ENCODE measurements at regions of chr10 and their contacts with region 1.

Region 1: GRCh38 chr10:110547139-110547761 is 20.2 kb upstream of the SMC3 start:
- ATAC-seq: peak; percentile 26 to 75 (median 54)
- H3K4me3 ChIP-seq: no peak overlapping the region
- H3K27ac ChIP-seq: no peak overlapping the region
- H3K4me1 ChIP-seq: peaks cover 0 to 5% of the 10 kb centered on the region in 2 donors

Region 2: GRCh38 chr10:110304780-110305421 is 242.3 kb before region 1 on chr10 and contains the start of gene SMNDC1:
- in situ Hi-C with region 1: loop called in 7 of 9 experiments (anchors 10 to 25 kb)
- ATAC-seq: peak; percentile 82 to 96 (median 94)
- H3K4me3 ChIP-seq: peak within 1 kb of the TSS; percentile 59 to 91 (median 67)
- H3K27ac ChIP-seq: peak within 1 kb of the TSS; percentile 88 to 93
- H3K4me1 ChIP-seq: peaks cover 6 to 24% of the 10 kb centered on the region in 2 donors
- total RNA-seq, gene SMNDC1: 8.3 to 24.0 (median 12.5) TPM

Region 3: DNA sequence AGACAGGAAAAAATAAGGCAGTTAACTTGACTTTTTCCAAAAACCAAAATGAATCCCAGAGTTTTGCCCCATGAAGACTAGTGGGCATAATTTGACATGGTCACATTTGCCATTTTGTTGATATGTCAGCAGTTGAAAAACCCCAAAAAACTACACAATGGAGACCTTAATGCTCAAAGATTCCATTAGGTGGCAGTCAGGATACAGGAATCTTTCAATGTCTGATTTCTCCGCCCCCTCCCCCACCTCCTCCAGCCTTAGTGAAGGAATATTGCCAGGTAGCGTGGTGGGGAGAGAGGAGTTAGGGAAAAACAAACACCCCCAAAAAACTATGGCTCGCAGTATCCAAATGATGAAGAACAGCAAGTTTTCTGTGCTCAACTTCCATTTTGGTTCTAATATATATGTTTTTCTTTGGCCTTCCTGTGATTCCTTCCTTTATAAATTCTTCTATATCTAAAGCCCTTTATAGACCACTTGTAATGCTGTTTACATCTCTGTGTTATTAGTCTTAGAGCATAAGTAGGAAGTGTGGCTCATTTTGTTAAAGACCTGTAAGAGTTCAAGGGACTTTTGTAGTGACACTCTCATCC is 235.8 kb before region 1 on chr10:
- in situ Hi-C with region 1: loop called in 7 of 9 experiments (anchors 10 to 25 kb)
- ATAC-seq: peak; percentile 26 to 78 (median 58)
- H3K4me3 ChIP-seq: no peak overlapping the region
- H3K27ac ChIP-seq: no peak overlapping the region
- H3K4me1 ChIP-seq: peaks cover 0 to under 1% of the 10 kb centered on the region in 2 donors

Region 4: GRCh38 chr10:110354322-110354766 is 192.9 kb before region 1 on chr10:
- in situ Hi-C with region 1: loop called in 2 of 9 experiments (anchors 25 kb)
- ATAC-seq: peak; percentile 69 to 97 (median 78)
- H3K4me3 ChIP-seq: no peak overlapping the region
- H3K27ac ChIP-seq: no peak overlapping the region
- H3K4me1 ChIP-seq: peaks cover 12 to 14% of the 10 kb centered on the region in 2 donors